ENCODE measurements at regions of chr7 and their contacts with region 1.

Region 1: DNA sequence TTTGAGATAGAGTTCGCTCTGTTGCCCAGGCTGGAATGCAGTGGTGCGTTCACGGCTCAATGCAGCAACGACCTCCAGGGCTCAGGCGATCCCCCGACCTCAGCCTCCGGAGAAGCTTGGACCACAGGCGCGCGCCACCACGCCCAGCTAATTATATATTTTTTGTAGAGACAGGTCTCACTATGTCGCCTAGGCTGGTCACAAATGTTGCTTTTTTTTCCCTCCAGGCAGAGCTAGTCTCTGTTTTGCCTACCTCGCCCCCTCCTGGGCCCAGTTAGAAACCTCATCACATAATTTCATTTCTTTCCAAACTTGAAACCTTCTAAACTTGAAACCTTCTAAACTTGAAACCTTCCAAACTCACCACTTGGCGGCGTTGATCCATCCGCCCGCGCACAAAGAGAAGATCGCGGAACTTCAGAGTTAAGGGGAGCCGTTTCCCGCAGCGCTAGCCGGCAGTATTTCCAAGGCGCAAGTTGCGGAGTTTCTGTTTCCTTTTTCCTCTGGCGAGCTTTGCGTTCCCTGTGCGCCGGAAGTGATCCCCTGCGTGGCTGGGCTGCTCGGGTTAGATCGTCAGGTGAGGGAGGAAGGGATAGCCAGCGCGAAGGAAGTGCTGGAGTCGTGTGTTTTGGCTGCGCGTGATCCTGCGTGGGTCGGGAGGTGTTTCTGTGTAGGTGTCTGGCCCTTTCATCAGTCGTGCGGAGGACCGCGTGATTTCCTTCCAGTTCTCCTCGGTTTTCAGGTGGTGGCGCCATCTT is at the start of gene SSBP1:
- DNase-seq: peak; percentile 95
- ATAC-seq: peak; percentile 86
- H3K4me3 ChIP-seq: peak within 1 kb of the TSS; percentile 94
- H3K27ac ChIP-seq: peak within 1 kb of the TSS; percentile 57
- H3K4me1 ChIP-seq: peaks cover 20% of the 10 kb centered on the region
- H3K27me3 ChIP-seq: no peaks in the 10 kb centered on the region
- CTCF ChIP-seq: peak; percentile 88
- total RNA-seq, gene SSBP1: 212 and 269 TPM in 2 replicates

Region 2: GRCh38 chr7:141558544-141559183 is 179.3 kb before region 1 on chr7:
- CTCF ChIA-PET with region 1: no interaction called
- POLR2A ChIA-PET with region 1: no interaction called
- intact Hi-C with region 1: loop called (anchors 5 kb)
- DNase-seq: peak; percentile 22
- ATAC-seq: peak; percentile 72
- H3K4me3 ChIP-seq: no peak overlapping the region
- H3K27ac ChIP-seq: no peak overlapping the region
- H3K4me1 ChIP-seq: no peaks in the 10 kb centered on the region
- H3K27me3 ChIP-seq: no peaks in the 10 kb centered on the region
- CTCF ChIP-seq: no peak

Region 3: DNA sequence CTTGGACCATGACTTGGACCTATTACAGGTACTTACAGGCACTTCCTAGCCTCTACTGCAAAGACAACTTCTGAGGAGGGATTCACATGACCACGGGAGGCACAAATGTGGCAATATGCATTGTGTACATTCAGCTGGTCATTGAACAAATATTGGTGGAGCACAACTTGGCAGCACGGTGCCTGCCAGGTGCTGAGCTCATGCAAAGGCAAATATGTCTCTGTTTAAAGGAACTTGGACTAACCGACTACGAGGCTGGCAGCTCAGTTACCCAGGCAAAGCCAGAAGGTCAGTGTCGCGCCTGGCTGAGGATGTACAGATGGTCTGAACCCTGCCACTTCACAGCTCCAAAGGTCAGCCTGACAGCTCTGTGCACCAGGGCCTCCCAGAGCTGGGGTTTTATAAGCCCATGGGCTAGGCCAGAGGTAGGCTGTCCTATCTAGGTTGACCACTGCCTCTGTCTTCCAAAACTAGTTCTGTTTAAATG is 42.2 kb before region 1 on chr7:
- CTCF ChIA-PET with region 1: no interaction called
- POLR2A ChIA-PET with region 1: interaction called, 7 read pairs
- intact Hi-C with region 1: loop called (anchors 1 kb)
- DNase-seq: peak; percentile 91
- ATAC-seq: peak; percentile 86
- H3K4me3 ChIP-seq: no peak overlapping the region
- H3K27ac ChIP-seq: peak overlapping the region; percentile 86
- H3K4me1 ChIP-seq: peaks cover 42% of the 10 kb centered on the region
- H3K27me3 ChIP-seq: no peaks in the 10 kb centered on the region
- CTCF ChIP-seq: no peak

Region 4: DNA sequence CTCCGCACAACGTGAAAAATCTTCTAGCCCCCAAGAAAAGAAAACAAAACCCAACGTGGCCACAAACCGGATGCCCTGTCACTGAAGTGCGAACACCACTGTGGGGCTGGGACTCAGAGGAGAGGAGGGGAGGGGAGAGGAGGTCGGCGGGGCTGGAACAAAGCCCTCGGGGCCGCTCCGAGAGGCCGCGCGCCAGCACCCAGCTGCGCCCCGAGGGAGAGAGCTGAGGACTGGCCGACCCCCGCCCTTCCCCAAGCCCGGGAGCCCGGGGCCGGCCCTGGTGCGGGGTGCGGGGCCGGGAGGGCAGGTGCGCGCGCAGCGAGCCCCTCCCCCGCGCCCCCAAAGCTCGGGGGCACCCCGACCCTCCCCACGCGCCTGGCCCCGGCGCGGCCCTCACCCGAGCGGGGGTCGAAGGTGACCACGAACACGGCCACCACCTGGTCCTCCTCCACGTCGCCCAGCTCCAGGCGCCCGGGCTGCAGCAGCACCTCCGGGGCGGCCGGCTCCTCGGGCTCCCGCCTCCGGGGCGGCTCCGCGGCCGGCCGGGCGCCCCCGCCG is 36.4 kb before region 1 on chr7:
- CTCF ChIA-PET with region 1: interaction called, 5 read pairs
- POLR2A ChIA-PET with region 1: interaction called, 10 read pairs
- intact Hi-C with region 1: loop called (anchors 1 kb)
- DNase-seq: peak; percentile 40
- ATAC-seq: peak; percentile 40
- H3K4me3 ChIP-seq: peak overlapping the region; percentile 75
- H3K27ac ChIP-seq: no peak overlapping the region
- H3K4me1 ChIP-seq: peaks cover 60% of the 10 kb centered on the region
- H3K27me3 ChIP-seq: no peaks in the 10 kb centered on the region
- CTCF ChIP-seq: no peak

Measured in PC-3 (cell line).